ENCODE measurements at regions of chr6 and their contacts with region 1.

Region 1: GRCh38 chr6:41066867-41067304 is 5.3 kb downstream of the OARD1 start:
- DNase-seq: no peak
- H3K4me3 ChIP-seq: no peak overlapping the region
- H3K27ac ChIP-seq: peak overlapping the region in 1 of 4 donors; percentile 13
- H3K4me1 ChIP-seq: peaks cover 11 to 32% (median 23%) of the 10 kb centered on the region in 4 donors
- H3K27me3 ChIP-seq: no peaks in the 10 kb centered on the region
- CTCF ChIP-seq: peak; percentile 77 to 84 (median 83)
- EP300 ChIP-seq: no peak
- POLR2A ChIP-seq: no peak

Region 2: GRCh38 chr6:41002216-41002615 is 64.7 kb before region 1 on chr6:
- intact Hi-C with region 1: loop called (anchors 2 kb)
- DNase-seq: no peak
- H3K4me3 ChIP-seq: no peak overlapping the region
- H3K27ac ChIP-seq: no peak overlapping the region
- H3K4me1 ChIP-seq: peaks cover 7 to 13% (median 8%) of the 10 kb centered on the region in 4 donors
- H3K27me3 ChIP-seq: no peaks in the 10 kb centered on the region
- CTCF ChIP-seq: no peak
- EP300 ChIP-seq: no peak
- POLR2A ChIP-seq: no peak

Measured in esophagus muscularis mucosa (tissue), 4 donors.